SK-N-SH (cell line): ENCODE measurements at regions of chr3 and their contacts with region 1.

Region 1: DNA sequence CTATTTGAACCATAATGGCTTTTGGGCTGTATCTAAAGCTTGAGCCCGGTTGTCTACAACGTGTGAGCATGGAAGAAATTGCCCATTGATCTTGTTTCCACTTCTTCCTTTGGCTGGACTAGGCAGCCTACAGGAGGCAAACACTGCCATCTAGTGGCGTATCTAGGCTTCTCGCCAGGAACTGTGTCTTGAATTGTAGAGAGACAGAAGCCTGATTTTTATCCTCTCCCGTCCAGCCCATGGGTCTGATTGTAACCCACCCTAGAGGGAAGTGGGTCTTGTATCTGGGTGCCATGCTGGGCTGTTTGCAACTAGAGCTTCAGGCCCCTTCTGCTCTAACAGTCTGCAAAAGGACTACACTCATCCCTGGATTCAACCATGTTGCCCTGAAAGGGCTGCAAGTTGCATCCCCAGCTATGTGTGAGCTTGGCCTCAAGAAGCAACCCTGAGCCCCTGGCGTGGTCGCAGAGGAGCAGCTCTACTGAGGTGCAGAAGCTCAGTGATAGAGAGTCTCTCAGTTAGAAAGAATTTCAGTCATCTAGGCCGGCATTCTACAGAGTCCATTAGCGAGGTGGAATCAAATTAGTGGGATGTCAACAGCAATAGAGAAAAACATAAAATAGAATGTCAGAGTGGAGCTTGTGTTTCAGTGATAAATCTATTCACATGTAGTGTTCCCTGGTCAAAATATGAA is 170.2 kb upstream of the UMPS start:
- DNase-seq: peak; percentile 78
- H3K4me3 ChIP-seq: peak overlapping the region in 1 of 2 experiments; percentile 20; a peak in 1 of 4 replicates
- H3K27ac ChIP-seq: peak overlapping the region; percentile 94 to 97
- H3K4me1 ChIP-seq: peaks cover 27 to 57% of the 10 kb centered on the region in 2 experiments
- H3K27me3 ChIP-seq: no peaks in the 10 kb centered on the region
- CTCF ChIP-seq: peak; percentile 94
- EP300 ChIP-seq: peak in 1 of 2 experiments; percentile 44; a peak in 1 of 4 replicates
- RAD21 ChIP-seq: peak; percentile 90

Region 2: GRCh38 chr3:124351430-124352148 is 208.4 kb before region 1 on chr3:
- CTCF ChIA-PET with region 1: interaction called, 42 read pairs
- POLR2A ChIA-PET with region 1: no interaction called
- DNase-seq: peak; percentile 62
- H3K4me3 ChIP-seq: no peak overlapping the region
- H3K27ac ChIP-seq: peak overlapping the region in 1 of 2 experiments; percentile 67; a peak in 2 of 4 replicates
- H3K4me1 ChIP-seq: peaks cover 0 to 10% of the 10 kb centered on the region in 2 experiments; a peak in 2 of 4 replicates
- H3K27me3 ChIP-seq: no peaks in the 10 kb centered on the region
- CTCF ChIP-seq: peak; percentile 77
- EP300 ChIP-seq: no peak
- RAD21 ChIP-seq: peak; percentile 93

Region 3: DNA sequence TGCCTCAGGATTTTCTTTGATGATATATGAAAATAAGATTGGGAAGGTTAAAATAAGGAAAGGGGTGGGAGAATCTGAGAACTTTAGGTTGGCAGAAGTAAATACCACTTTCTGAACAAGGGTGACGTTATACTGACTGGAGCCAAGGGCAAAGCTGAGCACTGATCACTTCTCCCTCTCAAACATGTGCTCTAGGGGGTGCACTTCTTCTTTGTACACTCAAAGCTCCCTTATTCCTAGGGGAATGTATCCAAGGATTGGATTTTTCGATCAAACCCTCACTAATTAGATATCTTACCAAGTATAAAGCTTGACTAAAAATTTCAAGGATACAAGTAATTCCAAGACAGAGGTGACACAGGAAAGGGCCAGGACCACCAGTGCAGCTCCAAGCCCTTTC is 73.7 kb before region 1 on chr3:
- CTCF ChIA-PET with region 1: interaction called, 10 read pairs
- POLR2A ChIA-PET with region 1: no interaction called
- DNase-seq: no peak
- H3K4me3 ChIP-seq: no peak overlapping the region
- H3K27ac ChIP-seq: no peak overlapping the region
- H3K4me1 ChIP-seq: no peaks in the 10 kb centered on the region
- H3K27me3 ChIP-seq: no peaks in the 10 kb centered on the region
- CTCF ChIP-seq: peak; percentile 29
- EP300 ChIP-seq: no peak
- RAD21 ChIP-seq: 0 out of 2 replicates have a peak, but pooled peaks have one; percentile 4

Region 4: DNA sequence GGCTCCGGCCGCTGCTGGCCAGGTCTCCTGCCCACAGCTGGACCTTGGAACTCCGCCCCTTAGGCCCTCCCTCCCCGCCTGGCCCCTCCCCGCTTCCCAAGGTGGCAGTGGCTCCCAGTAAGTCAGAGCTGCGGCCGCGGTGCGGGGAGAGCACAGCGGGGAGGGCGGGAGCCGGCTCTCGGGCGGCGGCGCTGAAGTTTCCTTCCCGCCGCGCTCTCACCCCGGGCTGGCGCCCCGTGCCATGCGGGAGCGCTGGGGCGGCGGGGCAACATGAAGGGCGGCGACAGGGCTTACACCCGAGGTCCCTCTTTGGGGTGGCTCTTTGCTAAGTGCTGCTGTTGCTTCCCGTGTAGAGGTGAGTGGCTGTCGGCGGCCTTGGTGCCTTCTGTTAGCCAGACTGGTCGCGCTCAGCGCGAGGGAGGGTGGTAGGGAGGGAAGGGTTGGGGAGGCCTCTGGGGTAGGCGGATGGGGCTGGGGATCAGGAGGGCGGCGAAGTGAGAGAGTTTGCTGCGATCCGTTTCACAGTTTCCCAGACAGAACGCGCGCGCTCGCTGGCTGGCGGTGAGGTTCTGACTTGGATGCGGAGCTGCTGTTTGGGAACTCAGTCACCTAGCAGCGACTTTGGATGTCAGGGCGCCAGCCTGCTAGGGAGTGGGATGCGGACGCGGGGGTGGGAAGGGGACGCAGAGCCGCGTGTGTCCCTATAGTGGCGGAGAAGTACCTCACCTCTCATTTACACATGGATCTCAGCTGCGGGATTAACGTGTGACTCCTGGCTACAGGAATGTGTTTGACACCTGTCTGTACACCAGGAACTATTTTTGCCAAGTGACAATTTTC is 24.7 kb after region 1 on chr3:
- CTCF ChIA-PET with region 1: interaction called, 85 read pairs
- POLR2A ChIA-PET with region 1: no interaction called
- DNase-seq: peak; percentile 91
- H3K4me3 ChIP-seq: peak overlapping the region; percentile 55 to 68
- H3K27ac ChIP-seq: no peak overlapping the region
- H3K4me1 ChIP-seq: peaks cover 0 to 25% of the 10 kb centered on the region in 2 experiments; a peak in 2 of 4 replicates
- H3K27me3 ChIP-seq: no peaks in the 10 kb centered on the region
- CTCF ChIP-seq: no peak
- EP300 ChIP-seq: no peak
- RAD21 ChIP-seq: no peak

Region 5: GRCh38 chr3:124696012-124696411 is 136.0 kb after region 1 on chr3:
- CTCF ChIA-PET with region 1: interaction called, 280 read pairs
- POLR2A ChIA-PET with region 1: no interaction called
- DNase-seq: no peak
- H3K4me3 ChIP-seq: no peak overlapping the region
- H3K27ac ChIP-seq: no peak overlapping the region
- H3K4me1 ChIP-seq: peaks cover 3 to 7% of the 10 kb centered on the region in 2 experiments; a peak in 1 of 4 replicates
- H3K27me3 ChIP-seq: no peaks in the 10 kb centered on the region
- CTCF ChIP-seq: no peak
- EP300 ChIP-seq: no peak
- RAD21 ChIP-seq: no peak

Region 6: DNA sequence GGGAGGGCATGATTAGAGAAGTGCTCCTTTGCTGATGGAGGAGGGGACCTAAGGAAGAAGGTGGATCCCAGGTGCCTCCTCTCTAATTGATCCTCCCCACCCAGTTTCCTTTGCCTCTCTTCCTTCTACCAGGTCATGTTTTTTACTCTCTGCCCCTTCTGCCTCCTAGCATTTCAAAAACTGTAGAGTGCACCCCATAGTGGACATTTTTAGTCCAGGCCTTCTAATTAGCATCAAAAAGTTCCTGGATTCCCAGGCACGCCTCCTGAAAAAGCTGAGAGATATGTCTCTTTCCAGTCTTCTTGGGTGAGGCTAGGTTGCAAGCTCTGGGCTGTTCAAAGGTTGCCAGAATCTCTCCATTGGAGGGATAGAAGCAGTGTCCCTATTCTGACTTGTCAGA is 345.8 kb after region 1 on chr3:
- CTCF ChIA-PET with region 1: interaction called, 14 read pairs
- POLR2A ChIA-PET with region 1: no interaction called
- DNase-seq: no peak
- H3K4me3 ChIP-seq: no peak overlapping the region
- H3K27ac ChIP-seq: no peak overlapping the region
- H3K4me1 ChIP-seq: no peaks in the 10 kb centered on the region; a peak in 1 of 4 replicates
- H3K27me3 ChIP-seq: no peaks in the 10 kb centered on the region
- CTCF ChIP-seq: no peak
- EP300 ChIP-seq: no peak
- RAD21 ChIP-seq: no peak